Gastrocnemius medialis (tissue), 4 donors: ENCODE measurements at regions of chr1 and their contacts with region 1.

Region 1: DNA sequence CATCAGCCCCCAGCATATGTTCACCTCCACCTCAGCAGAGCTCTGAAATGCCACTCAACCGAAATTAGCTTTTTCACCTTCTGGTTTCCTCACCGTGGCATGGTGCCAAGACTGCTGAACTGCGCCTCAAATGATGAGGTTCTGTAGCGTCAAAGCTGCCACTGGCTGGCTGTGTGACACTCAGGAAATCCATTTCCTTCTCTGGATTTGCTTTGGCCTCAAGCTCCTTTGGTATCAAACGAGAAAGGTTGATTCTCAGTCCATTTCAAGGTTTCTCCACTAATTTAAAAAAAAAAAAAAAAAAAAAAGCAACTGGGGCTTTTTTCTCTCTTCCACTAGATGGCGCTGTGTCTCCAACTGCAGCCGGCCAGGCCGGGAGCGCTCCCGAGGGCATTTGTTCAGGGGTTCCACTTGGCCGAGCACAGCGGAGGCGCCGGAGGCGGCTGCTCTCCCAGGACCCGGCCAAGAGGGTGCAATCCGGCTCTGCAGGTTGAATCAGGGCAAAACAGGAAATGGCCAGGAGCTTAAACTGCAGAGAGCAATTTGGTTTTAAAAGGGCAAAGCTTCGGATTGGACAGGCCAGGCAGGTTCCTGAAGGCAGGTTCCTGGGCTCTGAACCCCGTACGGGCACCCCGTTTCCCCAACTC is 26.5 kb upstream of the PLA2G2C start:
- DNase-seq: peak; percentile 22 to 23
- ATAC-seq: peak; percentile 36 to 58
- H3K4me3 ChIP-seq: peak overlapping the region in 1 of 4 donors; percentile 39
- H3K27ac ChIP-seq: no peak overlapping the region
- H3K4me1 ChIP-seq: peaks cover 0 to 8% of the 10 kb centered on the region in 2 donors
- H3K27me3 ChIP-seq: no peaks in the 10 kb centered on the region
- CTCF ChIP-seq: peak; percentile 44 to 89 (median 62)
- POLR2A ChIP-seq: no peak

Region 2: DNA sequence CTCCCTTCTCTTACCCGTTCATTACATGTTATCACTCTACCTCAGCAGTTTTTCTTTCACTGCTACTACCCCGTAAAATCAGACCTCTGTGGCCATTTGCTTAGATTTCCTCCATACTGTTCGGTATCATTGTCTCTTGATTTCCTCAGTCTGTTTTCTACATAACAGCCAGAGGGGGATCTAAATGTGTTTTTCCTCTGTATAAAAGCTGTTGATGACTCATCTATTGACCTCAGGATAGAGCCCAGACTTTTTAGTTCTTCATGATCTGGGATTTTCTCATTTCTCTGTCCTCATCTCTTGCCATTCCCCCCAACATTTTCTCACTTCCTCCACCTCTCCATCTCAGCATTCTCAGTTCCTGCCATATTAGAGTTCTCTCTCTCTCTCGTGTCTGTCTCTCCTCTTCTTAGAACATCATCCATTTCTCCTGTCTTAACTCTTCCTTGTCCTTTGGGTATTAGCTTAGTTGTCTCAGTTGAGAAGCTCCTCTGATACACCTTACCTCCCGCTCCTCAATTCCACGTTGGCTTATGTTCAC is 320.1 kb before region 1 on chr1:
- in situ Hi-C with region 1: no loop called
- intact Hi-C with region 1: no loop called
- DNase-seq: no peak
- ATAC-seq: no peak
- H3K4me3 ChIP-seq: no peak overlapping the region
- H3K27ac ChIP-seq: no peak overlapping the region
- H3K4me1 ChIP-seq: peaks cover 0 to 7% of the 10 kb centered on the region in 2 donors
- H3K27me3 ChIP-seq: no peaks in the 10 kb centered on the region
- CTCF ChIP-seq: no peak
- POLR2A ChIP-seq: no peak

Region 3: GRCh38 chr1:20361806-20362640 is 149.2 kb after region 1 on chr1:
- in situ Hi-C with region 1: no loop called
- intact Hi-C with region 1: loop called (anchors 2 kb)
- DNase-seq: peak in 1 of 2 donors; percentile 48
- ATAC-seq: peak in 1 of 2 donors; percentile 44
- H3K4me3 ChIP-seq: no peak overlapping the region
- H3K27ac ChIP-seq: no peak overlapping the region
- H3K4me1 ChIP-seq: peaks cover 26 to 37% of the 10 kb centered on the region in 2 donors
- H3K27me3 ChIP-seq: peaks cover 16 to 25% (median 19%) of the 10 kb centered on the region in 3 donors
- CTCF ChIP-seq: peak; percentile 54 to 81 (median 79)
- POLR2A ChIP-seq: no peak

Region 4: GRCh38 chr1:20430355-20431175 is 217.8 kb after region 1 on chr1:
- in situ Hi-C with region 1: no loop called
- intact Hi-C with region 1: loop called (anchors 5 kb)
- DNase-seq: no peak
- ATAC-seq: no peak
- H3K4me3 ChIP-seq: no peak overlapping the region
- H3K27ac ChIP-seq: no peak overlapping the region
- H3K4me1 ChIP-seq: no peaks in the 10 kb centered on the region
- H3K27me3 ChIP-seq: peaks cover 4 to 8% (median 6%) of the 10 kb centered on the region in 3 donors
- CTCF ChIP-seq: peak; percentile 38 to 64 (median 63)
- POLR2A ChIP-seq: no peak